ENCODE measurements at regions of chr5 and their contacts with region 1.

Region 1: DNA sequence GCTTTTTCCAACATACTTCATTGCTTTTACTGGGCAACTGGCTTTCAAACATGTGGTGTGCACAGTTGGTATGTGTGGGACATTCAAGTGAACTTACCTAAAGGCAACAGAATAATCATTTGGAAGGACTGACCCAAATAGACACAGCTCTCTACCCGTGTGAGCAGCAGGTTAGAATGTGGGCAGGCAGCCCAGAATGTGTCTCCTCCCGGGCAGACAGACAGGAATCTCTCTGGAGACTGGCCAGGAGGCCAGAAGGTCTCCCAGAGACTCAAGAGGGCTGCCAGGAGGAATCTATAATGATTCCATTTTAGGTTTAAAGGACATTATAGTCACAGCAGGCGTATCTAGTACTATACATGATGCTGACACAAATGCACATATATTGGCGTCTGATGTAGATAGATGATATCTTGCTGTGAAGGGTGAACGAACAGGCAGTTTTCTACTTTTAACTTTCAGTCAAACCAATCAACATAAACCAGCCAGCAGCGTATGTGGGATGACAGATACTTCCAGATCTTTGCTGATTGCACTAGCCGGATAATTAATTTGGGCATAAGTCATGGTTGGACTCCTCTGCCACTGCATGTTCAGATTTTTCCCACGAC is 297.4 kb upstream of the ZNF608 start:
- DNase-seq: peak; percentile 82
- ATAC-seq: peak; percentile 95

Region 2: GRCh38 chr5:125189531-125189941 is 145.7 kb after region 1 on chr5:
- intact Hi-C with region 1: loop called (anchors 10 kb)
- DNase-seq: no peak
- ATAC-seq: no peak

Region 3: GRCh38 chr5:125257057-125257972 is 213.4 kb after region 1 on chr5:
- intact Hi-C with region 1: no loop called
- DNase-seq: no peak
- ATAC-seq: peak; percentile 98